Right ventricle myocardium inferior (tissue), 1 donor: ENCODE measurements at regions of chr14 and their contacts with region 1.

Region 1: GRCh38 chr14:90894241-90894640 is 78.0 kb upstream of the TTC7B start:
- DNase-seq: no peak
- ATAC-seq: no peak

Region 2: DNA sequence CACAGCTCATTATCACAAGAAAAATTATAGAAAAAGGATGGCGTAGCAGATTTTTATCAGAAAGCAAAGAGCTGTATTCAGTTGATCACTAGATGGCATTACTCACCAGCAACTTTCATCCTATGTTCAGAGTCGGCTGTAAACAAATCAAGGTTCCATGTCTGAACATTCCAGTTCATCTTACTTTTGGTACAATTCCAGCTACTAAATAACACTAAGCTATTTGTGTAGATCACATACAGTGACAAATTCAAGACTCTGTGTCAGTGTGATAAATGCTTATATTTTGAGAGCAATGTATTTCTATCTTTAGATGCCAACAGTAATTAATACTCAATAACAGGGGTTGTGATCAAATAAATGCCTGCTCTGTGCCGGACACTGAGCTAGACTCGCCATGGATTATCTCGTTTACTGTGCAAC is 592.6 kb before region 1 on chr14:
- intact Hi-C with region 1: loop called (anchors 10 kb)
- DNase-seq: no peak
- ATAC-seq: peak; percentile 58

Region 3: GRCh38 chr14:90815822-90816700 is 78.2 kb before region 1 on chr14 and contains the start of gene TTC7B:
- intact Hi-C with region 1: loop called (anchors 5 kb)
- DNase-seq: peak; percentile 73
- ATAC-seq: peak; percentile 80
- total RNA-seq, gene TTC7B: 67.5 TPM

Region 4: DNA sequence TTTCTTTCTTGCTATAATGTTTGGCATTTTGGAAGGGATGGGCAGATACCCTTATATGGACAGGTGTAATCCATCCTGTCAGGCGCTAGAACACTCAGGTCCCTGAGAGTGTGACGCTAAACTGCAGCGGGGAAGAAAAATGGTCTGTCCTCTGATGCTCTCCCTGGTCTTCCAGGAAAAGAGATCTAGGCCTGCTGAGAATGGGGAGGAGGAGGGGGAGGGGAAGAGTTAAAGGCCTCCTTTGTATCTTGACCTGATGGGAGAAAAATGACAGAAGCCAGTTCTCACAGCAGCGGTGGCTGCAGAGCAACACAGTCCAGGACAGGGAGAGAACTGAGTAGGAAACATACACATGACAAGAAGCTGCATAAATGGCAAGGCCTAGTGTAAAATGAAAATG is 105.1 kb after region 1 on chr14:
- intact Hi-C with region 1: no loop called
- DNase-seq: no peak
- ATAC-seq: no peak

Region 5: DNA sequence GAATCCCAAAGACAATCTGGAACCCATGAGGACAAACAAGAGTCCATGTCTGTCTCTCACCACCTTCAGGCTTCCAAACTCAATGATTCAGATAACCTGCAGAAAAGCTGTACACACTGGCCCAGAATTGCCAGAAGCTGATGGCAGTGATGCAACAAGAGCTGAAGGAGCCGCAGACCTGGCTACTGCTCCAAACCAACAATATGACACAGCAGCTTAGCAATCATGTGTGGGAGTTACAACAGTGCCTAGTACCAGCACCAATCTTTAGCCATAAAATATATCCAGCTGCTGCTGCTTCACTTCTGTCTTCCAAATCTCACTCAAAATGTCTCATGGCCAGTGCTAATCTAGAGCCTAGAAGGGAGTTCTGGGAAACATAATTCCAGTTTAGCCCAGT is 144.2 kb after region 1 on chr14:
- intact Hi-C with region 1: no loop called
- DNase-seq: no peak
- ATAC-seq: no peak

Region 6: GRCh38 chr14:91303091-91303923 is 409.1 kb after region 1 on chr14:
- intact Hi-C with region 1: no loop called
- DNase-seq: no peak
- ATAC-seq: peak; percentile 57